Right ventricle myocardium superior (tissue), 1 donor: ENCODE measurements at regions of chr20 and their contacts with region 1.

Region 1: DNA sequence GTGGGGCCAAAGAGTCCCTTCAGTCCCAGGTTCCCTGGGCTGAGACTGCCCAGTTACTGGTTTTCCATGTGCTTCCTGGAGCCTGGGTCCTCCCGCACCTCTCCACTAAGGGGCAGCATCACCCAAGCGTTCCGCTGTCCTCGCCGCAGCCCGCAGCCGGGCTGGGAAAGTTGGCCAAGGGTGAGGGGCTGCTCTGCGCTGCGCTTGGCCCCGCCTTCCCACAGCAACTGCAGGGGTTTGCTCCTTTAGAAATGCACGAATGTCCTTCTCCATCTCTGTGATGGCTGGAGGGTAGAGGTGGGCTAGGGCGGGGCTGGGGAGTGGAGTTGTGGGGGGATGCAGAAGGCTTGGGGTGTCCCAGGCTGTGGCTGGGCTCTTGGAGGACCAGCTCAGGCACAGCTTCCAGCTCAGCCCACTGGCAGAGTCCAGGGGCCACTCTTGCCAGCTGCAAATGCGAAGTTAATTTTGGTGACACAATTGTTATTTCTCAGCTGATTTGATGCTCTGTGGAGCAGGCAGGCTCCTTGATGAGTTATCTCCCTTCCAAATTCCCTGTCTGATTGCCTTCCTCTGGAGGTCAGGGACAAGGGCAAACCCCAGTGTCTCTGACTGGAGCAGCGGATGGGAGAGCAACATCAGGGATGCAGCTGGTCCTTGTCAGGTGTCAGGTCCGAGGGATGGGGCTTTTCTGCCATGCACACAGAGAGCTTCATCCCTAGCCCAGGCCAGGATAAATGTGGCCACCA is 63.2 kb downstream of the NOL4L start:
- DNase-seq: peak; percentile 72
- ATAC-seq: peak; percentile 83

Region 2: DNA sequence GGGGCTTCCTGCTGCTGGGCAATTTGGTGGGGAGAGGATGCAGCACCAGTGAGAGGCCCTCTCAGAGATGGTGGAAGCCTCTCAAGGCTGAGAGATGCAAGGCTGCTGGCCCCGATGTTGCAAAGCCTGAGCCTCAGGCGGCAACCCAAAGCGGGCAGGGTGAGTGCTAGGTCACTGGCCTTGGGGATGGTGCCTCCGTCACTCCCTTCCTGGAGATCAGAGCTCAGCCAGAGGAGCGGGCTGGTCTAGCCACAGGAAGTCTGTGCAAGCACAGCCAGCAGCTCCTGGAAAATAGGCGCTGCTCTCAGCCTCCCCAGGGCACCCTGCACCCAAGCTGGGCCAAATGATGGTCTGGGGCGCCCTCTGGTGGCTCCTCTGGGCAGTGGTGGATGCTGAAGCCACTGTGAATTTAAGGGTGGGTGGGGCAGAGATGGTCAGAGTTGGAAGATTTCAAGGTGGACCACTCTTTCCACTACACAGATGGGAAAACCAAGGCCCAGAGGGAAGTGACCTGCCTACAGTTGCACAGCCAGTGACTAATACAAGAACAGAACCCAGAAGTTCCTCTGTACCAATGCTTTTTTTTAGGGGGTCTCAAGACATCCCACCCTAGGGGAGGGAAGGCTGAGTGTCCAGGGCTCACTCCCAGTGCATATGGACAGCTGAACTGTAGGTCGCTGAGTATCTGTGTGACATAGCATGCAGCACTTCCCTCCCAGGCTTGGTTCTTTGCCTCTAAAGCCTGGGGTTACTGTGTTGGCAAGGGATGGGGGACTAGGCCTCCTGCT is 131.0 kb after region 1 on chr20:
- intact Hi-C with region 1: loop called (anchors 1 kb)
- DNase-seq: peak; percentile 92
- ATAC-seq: peak; percentile 99

Region 3: GRCh38 chr20:33037456-33037855 is 515.5 kb after region 1 on chr20:
- intact Hi-C with region 1: no loop called
- DNase-seq: no peak
- ATAC-seq: no peak

Region 4: DNA sequence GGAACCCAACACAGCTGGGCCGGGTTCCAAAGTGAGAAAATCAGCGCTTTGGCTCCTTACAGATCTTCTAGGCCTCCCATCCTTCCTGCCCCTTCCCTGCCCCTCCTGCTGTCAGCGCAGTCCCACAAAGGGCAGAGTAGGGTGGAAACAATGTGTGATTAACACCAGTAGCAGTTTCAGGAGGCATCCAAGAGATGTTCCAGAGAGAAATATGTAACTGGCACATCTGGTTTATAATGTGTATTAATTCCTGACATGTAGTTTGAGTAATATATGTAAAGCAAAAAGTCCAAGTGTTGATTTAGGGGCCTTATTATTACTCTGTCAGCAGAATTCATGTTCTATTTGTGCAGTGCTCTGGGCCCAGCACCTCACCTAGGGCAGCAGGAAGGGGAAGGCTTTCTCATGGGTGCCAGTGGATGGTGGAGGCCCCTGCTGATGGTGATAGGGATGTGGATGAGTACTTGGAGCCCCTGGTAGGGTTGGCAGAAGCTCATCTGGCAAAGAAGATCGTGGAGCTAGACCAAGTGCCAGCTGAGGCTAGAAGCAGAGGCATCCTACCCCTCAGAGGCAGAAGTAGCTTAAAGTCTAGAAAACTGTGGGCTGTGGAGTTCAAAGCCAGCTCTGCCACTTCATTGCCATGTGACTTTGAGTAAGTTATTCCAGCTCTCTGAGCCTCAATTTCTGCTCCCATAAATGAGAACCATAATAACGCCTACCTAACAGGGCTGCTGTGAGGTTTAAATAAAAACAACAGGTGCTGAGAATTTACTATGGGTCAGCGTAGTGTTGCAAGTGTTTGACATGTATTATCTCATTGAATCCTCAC is 1449.4 kb after region 1 on chr20:
- intact Hi-C with region 1: no loop called
- DNase-seq: no peak
- ATAC-seq: no peak